ENCODE measurements at regions of chr6 and their contacts with region 1.

Region 1: GRCh38 chr6:37432916-37433656 is at the start of gene CMTR1:
- DNase-seq: peak; percentile 99
- H3K4me3 Mint-ChIP-seq: peak within 1 kb of the TSS; percentile 96
- H3K27ac Mint-ChIP-seq: peak within 1 kb of the TSS; percentile 98
- H3K4me1 Mint-ChIP-seq: peaks cover 41% of the 10 kb centered on the region
- H3K27me3 Mint-ChIP-seq: peaks cover 5% of the 10 kb centered on the region
- total RNA-seq, gene CMTR1: 53.5 and 54.4 TPM in 2 replicates

Region 2: DNA sequence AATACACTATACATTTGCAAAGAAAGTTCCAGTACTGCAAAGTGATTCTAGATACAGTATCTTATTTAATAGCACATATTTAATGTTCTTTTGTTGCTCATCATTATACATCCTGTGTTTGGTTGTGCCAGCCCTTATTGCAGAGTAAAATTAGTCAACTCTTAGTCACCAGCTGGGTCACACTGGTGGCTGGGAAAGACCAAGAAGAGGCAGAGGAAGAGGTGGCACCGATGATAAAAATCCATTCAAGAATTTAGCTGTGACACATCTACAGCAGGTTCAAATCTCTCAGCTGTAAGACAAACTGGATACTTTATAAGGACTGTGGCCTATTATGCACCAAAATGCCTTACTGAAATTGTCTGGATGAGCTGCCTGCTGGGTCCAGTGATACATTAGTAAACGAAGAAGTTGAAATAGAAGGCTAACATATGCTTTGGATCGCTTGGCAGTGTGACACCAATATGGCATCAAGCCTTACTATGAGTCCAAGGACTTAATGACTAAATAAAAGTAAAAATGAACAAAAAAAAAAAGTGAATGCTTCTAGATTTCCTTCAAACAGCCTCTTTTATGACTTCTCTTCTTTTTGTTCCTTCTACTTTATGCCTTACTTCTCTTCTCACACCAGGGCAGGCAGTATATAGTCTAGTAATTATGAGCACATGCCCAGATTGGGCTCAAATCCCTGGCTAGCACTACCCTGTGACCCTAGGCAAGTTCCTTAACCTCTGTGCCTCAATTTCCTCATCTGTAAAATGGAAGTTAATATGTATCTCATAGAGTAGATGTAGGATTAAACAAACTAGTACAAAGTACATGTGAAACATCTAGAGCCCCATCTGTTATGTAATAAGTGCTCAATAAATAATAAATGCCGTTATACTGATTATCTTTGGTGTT is 108.7 kb before region 1 on chr6:
- intact Hi-C with region 1: loop called (anchors 10 kb)
- DNase-seq: no peak
- H3K4me3 Mint-ChIP-seq: no peak overlapping the region
- H3K27ac Mint-ChIP-seq: peak overlapping the region; percentile 64
- H3K4me1 Mint-ChIP-seq: peaks cover 19% of the 10 kb centered on the region
- H3K27me3 Mint-ChIP-seq: no peaks in the 10 kb centered on the region

Region 3: GRCh38 chr6:37381579-37381978 is 51.5 kb before region 1 on chr6:
- intact Hi-C with region 1: loop called (anchors 1 kb)
- DNase-seq: peak; percentile 2
- H3K4me3 Mint-ChIP-seq: no peak overlapping the region
- H3K27ac Mint-ChIP-seq: no peak overlapping the region
- H3K4me1 Mint-ChIP-seq: no peaks in the 10 kb centered on the region
- H3K27me3 Mint-ChIP-seq: no peaks in the 10 kb centered on the region

Region 4: GRCh38 chr6:37418722-37419121 is 14.4 kb before region 1 on chr6:
- intact Hi-C with region 1: no loop called
- DNase-seq: no peak
- H3K4me3 Mint-ChIP-seq: no peak overlapping the region
- H3K27ac Mint-ChIP-seq: no peak overlapping the region
- H3K4me1 Mint-ChIP-seq: no peaks in the 10 kb centered on the region
- H3K27me3 Mint-ChIP-seq: peaks cover 11% of the 10 kb centered on the region

Region 5: GRCh38 chr6:37516076-37516919 is 83.2 kb after region 1 on chr6:
- intact Hi-C with region 1: loop called (anchors 1 kb)
- DNase-seq: peak; percentile 81
- H3K4me3 Mint-ChIP-seq: peak overlapping the region; percentile 75
- H3K27ac Mint-ChIP-seq: peak overlapping the region; percentile 92
- H3K4me1 Mint-ChIP-seq: peaks cover 57% of the 10 kb centered on the region
- H3K27me3 Mint-ChIP-seq: peaks cover 9% of the 10 kb centered on the region

Region 6: DNA sequence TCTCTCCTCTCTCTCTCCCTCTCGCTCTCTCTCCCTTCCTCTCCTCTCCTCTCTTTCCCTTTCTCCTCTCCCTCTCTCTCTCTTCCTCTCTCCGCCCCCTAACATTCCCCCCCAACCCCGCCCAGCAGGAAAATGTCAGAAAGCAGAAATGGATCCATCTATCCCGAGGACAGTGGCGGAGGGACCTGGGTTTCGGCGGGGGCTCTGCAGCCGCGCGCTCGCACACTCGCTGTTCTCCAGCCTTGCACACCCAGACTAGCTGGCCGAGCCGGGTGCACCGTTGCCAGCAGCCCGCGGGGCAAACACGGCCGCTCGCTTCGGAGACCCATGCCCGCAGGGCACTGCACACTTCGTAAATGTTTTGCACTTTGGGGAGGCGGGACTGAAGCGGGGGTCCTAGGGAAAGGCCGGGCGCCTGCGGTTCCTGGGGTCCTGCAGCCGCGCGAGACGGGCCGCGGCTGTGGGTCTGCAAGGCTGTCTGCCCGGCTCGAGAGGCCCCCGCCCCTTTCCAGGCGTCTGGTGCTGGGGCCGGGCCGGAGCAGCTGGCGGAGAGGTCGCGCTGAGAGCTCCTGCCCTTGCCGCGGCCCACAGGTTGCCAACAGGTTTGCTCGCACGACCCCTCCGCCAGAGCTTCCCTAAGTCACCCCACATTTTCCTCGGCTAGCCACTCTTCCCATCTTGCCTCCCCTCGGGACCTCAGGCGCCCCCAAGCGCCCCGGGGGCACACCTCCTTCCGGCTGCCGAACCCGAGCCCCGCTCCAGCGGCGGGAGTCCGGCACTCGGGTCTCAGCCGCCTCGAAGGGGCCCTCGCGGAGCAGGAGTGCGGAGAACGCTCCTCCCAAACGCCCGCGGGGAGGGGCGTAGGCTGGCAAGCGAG is 265.4 kb after region 1 on chr6:
- intact Hi-C with region 1: loop called (anchors 2 kb)
- DNase-seq: peak; percentile 58
- H3K4me3 Mint-ChIP-seq: peak overlapping the region; percentile 91
- H3K27ac Mint-ChIP-seq: peak overlapping the region; percentile 91
- H3K4me1 Mint-ChIP-seq: peaks cover 28% of the 10 kb centered on the region
- H3K27me3 Mint-ChIP-seq: peaks cover 34% of the 10 kb centered on the region